Colonic mucosa (tissue), 4 donors: ENCODE measurements at regions of chr15 and their contacts with region 1.

Region 1: DNA sequence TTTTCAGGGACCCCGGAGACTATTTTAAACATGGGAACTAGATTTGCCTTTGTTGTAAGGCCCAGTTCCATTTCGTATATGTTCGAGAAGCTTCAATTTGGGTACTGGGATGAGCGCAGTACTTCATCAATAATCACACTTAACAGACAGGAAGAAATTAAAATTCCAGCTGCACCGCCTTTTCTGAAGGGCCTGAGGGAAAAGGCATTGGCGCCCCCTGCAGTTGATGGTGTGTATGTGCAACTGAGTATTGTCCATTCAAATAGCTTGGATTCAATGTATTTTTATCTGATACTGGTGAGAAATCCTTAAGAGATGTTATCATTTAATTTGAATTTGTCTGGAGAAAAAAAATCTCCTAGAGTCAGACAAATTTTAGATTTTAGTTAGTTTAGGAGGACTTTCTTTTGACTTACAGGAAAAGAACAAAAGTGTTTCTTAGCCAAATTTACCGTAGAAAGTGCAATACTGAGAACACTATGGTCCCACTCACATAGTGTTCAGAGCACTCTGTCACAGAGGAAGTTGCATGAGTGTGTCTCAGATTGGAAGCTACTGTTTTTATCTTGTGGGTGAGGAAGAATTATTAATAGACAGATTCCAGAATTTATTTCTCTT is 5.4 kb upstream of the ALDH1A2 start:
- DNase-seq: peak; percentile 61
- H3K4me3 ChIP-seq: no peak overlapping the region
- H3K27ac ChIP-seq: no peak overlapping the region
- H3K4me1 ChIP-seq: no peaks in the 10 kb centered on the region
- H3K27me3 ChIP-seq: peaks cover 8% of the 10 kb centered on the region
- CTCF ChIP-seq: peak; percentile 82

Region 2: DNA sequence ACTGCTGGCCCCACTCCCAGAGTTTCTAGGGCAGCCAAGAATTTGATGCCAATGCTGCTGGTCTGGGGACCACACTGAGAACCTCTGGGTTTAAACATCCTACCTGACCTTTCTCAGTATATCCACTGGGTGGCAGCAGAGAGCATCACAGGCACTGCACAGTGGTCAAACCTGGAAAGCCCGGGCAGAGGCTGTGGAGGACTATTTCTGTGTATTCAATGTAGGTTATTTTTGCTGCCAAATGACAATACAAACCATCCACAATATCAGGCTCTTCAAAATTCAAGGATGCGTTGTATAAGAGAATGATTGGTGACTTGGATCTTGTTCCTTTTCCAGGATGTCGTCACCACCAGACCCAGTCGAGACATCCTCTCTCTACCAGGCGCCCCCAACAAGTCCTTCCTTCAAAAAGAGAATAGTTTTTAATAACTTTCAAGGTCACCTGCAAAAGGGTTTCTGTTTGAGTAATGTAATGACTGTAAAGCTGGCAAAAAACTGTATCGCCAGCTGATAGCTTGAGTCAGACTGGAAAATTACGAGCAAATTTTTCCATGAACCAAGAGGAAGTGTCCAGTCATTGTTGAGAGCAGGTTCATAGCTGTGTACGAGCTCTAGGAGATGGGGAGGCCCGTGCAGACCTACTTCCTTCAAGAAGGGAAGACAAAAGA is 509.7 kb before region 1 on chr15:
- intact Hi-C with region 1: loop called (anchors 10 kb)
- DNase-seq: peak; percentile 87
- H3K4me3 ChIP-seq: no peak overlapping the region
- H3K27ac ChIP-seq: no peak overlapping the region
- H3K4me1 ChIP-seq: peaks cover 4% of the 10 kb centered on the region
- H3K27me3 ChIP-seq: no peaks in the 10 kb centered on the region
- CTCF ChIP-seq: peak; percentile 90

Region 3: GRCh38 chr15:57732526-57733331 is 338.2 kb before region 1 on chr15:
- intact Hi-C with region 1: loop called (anchors 5 kb)
- DNase-seq: peak; percentile 64
- H3K4me3 ChIP-seq: no peak overlapping the region
- H3K27ac ChIP-seq: no peak overlapping the region
- H3K4me1 ChIP-seq: peaks cover 5% of the 10 kb centered on the region
- H3K27me3 ChIP-seq: no peaks in the 10 kb centered on the region
- CTCF ChIP-seq: peak; percentile 82

Region 4: DNA sequence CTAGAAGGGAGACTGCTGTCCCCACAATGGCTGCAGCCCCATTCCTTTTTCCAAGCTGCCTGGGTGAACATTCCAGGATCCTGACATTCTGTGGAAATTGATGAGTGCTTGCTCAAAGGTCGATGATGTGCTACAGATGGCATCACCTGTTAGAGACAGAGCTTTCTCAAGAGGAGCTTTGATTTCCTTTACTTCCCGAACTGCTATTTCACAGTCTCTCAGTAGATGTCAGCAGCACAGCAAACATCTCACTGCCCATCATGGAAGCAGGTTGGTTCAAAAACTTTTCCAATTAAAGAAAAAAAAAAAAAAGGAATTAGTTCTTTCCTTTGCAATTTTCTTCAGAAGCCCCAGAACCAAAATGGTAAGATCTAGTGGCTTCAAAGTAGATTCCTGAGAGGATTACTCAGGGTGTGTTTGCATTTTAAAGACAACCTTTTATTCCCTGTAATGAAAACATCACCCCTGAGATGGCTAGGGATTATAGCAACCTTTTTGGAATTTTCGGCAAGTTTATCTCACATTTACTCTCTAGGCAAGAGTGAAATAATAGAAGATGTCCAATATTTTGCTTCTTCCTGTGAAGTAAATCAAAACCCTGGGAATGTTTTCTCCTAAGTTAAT is 319.6 kb before region 1 on chr15:
- intact Hi-C with region 1: loop called (anchors 5 kb)
- DNase-seq: no peak
- H3K4me3 ChIP-seq: no peak overlapping the region
- H3K27ac ChIP-seq: no peak overlapping the region
- H3K4me1 ChIP-seq: no peaks in the 10 kb centered on the region
- H3K27me3 ChIP-seq: no peaks in the 10 kb centered on the region
- CTCF ChIP-seq: no peak

Region 5: DNA sequence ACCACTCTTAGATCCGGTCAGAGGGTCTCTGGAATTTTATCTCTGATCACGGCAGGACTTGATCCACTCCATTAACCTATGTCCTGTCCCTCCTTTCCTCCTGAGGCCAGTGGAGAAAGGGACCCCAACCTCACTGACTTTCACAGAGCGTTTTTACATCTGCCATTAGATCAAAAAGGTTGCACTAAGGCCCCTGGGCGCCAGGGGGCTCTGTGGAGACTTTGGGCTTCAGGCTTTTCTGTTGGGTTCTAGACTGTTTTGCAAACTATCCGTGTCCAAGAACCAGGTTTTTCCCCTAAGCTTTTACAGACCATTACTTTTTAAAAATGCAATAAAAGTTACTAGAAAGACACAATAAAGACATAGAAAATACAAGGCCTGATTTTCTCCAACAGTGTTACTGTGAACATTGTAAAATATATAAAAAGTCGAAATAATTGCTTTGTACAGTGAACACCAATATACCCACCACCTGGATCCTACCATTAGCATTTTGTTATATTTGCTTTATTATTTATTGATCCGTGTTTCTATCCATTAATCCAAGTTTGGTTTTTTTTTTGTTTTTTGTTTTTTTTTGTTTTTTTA is 204.7 kb before region 1 on chr15:
- intact Hi-C with region 1: loop called (anchors 2 kb)
- DNase-seq: peak; percentile 77
- H3K4me3 ChIP-seq: no peak overlapping the region
- H3K27ac ChIP-seq: no peak overlapping the region
- H3K4me1 ChIP-seq: no peaks in the 10 kb centered on the region
- H3K27me3 ChIP-seq: no peaks in the 10 kb centered on the region
- CTCF ChIP-seq: peak; percentile 77

Region 6: GRCh38 chr15:57972864-57973263 is 98.0 kb before region 1 on chr15:
- intact Hi-C with region 1: loop called (anchors 5 kb)
- DNase-seq: no peak
- H3K4me3 ChIP-seq: no peak overlapping the region
- H3K27ac ChIP-seq: no peak overlapping the region
- H3K4me1 ChIP-seq: no peaks in the 10 kb centered on the region
- H3K27me3 ChIP-seq: no peaks in the 10 kb centered on the region
- CTCF ChIP-seq: no peak

Region 7: DNA sequence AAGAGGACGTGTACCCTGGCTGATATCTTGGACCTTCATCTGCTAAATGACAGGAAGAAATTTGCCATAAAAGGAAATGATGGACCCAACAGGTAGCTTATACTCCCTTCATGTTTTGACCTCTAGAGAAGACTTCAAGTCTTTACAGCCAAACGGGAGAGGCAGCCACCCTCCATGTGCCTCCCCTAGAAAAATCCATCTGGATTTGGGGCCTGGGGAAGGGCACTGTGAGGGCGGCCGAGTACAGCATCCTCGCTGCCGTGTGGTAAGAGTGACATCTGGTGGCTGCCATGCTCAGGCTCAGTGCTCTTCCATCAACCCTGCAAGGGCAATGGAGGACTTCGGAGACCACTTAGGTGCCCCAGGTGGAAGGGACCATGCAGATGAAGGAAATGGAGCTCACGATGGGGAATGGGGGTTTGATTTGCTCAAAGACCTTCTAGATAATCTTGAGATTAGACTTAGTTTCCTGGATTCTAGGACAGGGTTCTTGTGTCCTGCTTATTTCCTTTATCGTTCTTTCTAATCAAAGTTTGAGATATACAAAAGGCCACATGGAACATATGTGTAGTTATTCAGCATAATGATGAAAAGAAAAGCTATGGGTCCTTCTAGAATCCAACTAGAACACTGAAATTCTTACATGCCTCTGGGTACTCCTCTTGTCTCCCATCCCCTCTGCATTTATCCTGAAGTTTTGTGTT is 111.7 kb after region 1 on chr15:
- intact Hi-C with region 1: loop called (anchors 10 kb)
- DNase-seq: no peak
- H3K4me3 ChIP-seq: no peak overlapping the region
- H3K27ac ChIP-seq: no peak overlapping the region
- H3K4me1 ChIP-seq: no peaks in the 10 kb centered on the region
- H3K27me3 ChIP-seq: no peaks in the 10 kb centered on the region
- CTCF ChIP-seq: peak; percentile 56